Caco-2 (cell line): ENCODE measurements at regions of chr14 and their contacts with region 1.

Region 1: DNA sequence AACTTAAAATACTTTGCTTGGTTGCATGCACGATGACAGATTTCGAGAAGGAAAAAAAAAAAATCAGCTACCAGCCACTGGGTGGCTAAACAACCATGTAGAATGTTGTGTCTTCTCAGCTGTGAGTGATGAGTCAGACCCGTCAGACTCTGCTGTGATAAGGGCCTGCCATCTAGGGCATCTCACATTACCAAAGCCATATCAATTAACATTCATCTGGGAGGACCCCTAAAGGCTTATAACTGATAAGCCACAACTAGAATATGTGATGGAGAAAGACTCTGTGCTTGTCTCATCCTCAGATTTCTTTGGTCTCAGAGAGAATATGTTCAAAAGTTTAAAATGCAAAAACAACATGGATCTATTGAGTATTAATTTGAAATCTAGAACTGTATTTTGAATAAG is 111.5 kb downstream of the PAX9 start:
- DNase-seq: peak; percentile 56 to 58
- H3K4me3 ChIP-seq: no peak overlapping the region
- H3K4me3 Mint-ChIP-seq: no peak overlapping the region
- H3K27ac Mint-ChIP-seq: peak overlapping the region; percentile 57
- H3K4me1 ChIP-seq: peaks cover 51% of the 10 kb centered on the region
- H3K4me1 Mint-ChIP-seq: peaks cover 29% of the 10 kb centered on the region
- H3K27me3 ChIP-seq: no peaks in the 10 kb centered on the region
- H3K27me3 Mint-ChIP-seq: no peaks in the 10 kb centered on the region
- CTCF ChIP-seq: peak; percentile 46 to 48

Region 2: DNA sequence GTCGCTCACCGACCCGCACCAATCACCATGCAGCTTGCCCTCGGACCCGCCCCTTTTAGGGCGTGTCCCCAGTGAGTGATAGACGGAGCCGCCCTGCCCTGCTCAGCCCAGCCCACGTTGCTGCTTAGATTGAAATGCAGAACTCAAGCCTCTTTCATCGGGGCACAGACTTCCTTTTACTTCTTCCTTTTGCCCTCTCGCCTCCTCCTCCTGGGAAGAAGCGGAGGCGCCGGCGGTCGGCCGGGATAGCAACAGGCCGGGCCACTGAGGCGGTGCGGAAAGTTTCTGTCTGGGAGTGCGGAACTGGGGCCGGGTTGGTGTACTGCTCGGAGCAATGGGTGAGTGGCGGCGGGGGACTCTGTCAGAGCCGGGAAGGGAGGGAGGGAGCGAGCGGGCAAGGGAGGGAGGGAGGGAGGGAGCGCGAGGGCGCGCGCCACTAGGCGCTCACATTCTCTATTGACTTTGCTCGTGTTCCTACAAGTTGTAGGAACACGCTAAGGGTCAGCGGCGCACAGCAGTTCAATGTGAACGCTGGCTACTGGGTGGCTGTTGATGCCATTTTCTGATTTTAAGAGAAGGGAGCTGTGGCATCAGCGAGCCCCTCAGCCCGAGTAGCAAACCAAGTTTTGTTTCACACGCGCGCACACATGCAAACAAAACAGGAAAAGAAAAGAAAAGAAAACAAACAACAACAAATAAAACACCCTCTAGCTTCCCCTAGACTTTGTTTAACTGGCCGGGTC is 111.2 kb before region 1 on chr14 and contains the start of gene PAX9:
- CTCF ChIA-PET with region 1: no interaction called
- POLR2A ChIA-PET with region 1: no interaction called
- intact Hi-C with region 1: loop called (anchors 5 kb)
- DNase-seq: peak; percentile 93 to 95
- H3K4me3 ChIP-seq: peak within 1 kb of the TSS; percentile 64
- H3K4me3 Mint-ChIP-seq: peak within 1 kb of the TSS; percentile 82
- H3K27ac Mint-ChIP-seq: peak within 1 kb of the TSS; percentile 83
- H3K4me1 ChIP-seq: peaks cover 5% of the 10 kb centered on the region; the same call in 1 of the 2 replicates
- H3K4me1 Mint-ChIP-seq: no peaks in the 10 kb centered on the region
- H3K27me3 ChIP-seq: no peaks in the 10 kb centered on the region
- H3K27me3 Mint-ChIP-seq: no peaks in the 10 kb centered on the region
- CTCF ChIP-seq: no peak
- total RNA-seq, gene PAX9: 6.9 and 7.2 TPM in 2 replicates

Region 3: DNA sequence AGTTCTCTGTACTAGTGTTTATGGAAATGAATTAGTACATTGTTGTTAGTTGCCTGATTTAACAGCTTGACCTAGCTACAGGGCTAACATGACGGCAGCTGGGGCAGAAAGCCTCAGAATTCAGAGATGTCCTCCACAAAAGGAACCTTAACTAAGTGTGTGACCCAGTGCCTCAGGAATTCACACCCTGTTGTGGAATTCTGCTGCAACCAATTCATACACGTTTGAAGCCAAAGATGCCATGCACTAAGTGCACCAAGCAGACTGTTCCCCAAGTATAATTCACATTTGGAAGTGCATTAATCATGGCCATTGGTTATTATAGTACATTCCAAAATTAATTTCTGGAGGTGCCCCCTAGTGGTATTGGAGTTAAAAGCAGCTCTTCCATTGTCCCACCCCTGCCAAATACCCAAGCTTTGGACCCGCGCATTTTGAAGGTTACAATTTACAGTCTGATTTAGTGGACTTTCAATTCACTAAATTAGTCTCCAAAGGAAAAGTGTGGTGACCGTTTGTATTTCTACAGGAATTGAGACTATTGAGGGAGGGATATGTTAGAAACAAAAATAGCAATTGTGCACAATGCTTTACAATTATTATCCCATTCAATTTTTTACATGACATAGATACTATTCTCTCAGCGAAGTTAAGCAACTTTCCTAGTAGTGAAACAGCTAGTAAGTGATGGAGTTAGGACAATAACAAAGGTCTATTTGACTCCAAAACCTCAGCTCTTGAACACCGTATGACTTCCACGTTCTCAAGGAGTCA is 25.5 kb before region 1 on chr14:
- CTCF ChIA-PET with region 1: no interaction called
- POLR2A ChIA-PET with region 1: no interaction called
- intact Hi-C with region 1: no loop called
- DNase-seq: peak in 1 of 2 experiments; percentile 16
- H3K4me3 ChIP-seq: no peak overlapping the region
- H3K4me3 Mint-ChIP-seq: no peak overlapping the region
- H3K27ac Mint-ChIP-seq: no peak overlapping the region
- H3K4me1 ChIP-seq: peaks cover 11% of the 10 kb centered on the region; the same call in 1 of the 2 replicates
- H3K4me1 Mint-ChIP-seq: no peaks in the 10 kb centered on the region
- H3K27me3 ChIP-seq: no peaks in the 10 kb centered on the region
- H3K27me3 Mint-ChIP-seq: no peaks in the 10 kb centered on the region
- CTCF ChIP-seq: peak; percentile 47 to 67

Region 4: DNA sequence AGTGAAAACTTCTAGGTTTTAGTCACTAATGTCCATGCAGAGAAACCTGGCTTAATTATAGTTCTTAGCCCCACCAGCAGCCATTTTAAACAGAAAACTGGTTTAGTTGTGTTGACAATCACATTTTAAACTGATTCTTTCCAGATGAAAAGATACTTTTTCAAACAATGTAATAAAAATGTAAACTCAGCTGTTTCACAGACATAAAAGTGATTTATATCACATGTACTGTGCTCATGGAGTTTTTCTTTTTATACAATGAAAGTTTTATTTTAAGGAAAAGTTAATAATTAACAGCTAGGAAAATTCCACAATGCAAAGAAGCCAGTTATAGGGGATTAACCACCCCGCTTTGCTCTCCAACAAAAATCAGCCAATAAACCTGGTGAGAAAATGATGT is 18.3 kb after region 1 on chr14:
- CTCF ChIA-PET with region 1: no interaction called
- POLR2A ChIA-PET with region 1: no interaction called
- intact Hi-C with region 1: loop called (anchors 2 kb)
- DNase-seq: no peak
- H3K4me3 ChIP-seq: no peak overlapping the region
- H3K4me3 Mint-ChIP-seq: peak overlapping the region; percentile 33
- H3K27ac Mint-ChIP-seq: no peak overlapping the region
- H3K4me1 ChIP-seq: peaks cover 30% of the 10 kb centered on the region
- H3K4me1 Mint-ChIP-seq: peaks cover 4% of the 10 kb centered on the region
- H3K27me3 ChIP-seq: no peaks in the 10 kb centered on the region
- H3K27me3 Mint-ChIP-seq: no peaks in the 10 kb centered on the region
- CTCF ChIP-seq: no peak

Region 5: GRCh38 chr14:36901861-36902260 is 128.7 kb after region 1 on chr14:
- CTCF ChIA-PET with region 1: no interaction called
- POLR2A ChIA-PET with region 1: no interaction called
- intact Hi-C with region 1: no loop called
- DNase-seq: no peak
- H3K4me3 ChIP-seq: no peak overlapping the region
- H3K4me3 Mint-ChIP-seq: no peak overlapping the region
- H3K27ac Mint-ChIP-seq: no peak overlapping the region
- H3K4me1 ChIP-seq: no peaks in the 10 kb centered on the region
- H3K4me1 Mint-ChIP-seq: no peaks in the 10 kb centered on the region
- H3K27me3 ChIP-seq: no peaks in the 10 kb centered on the region
- H3K27me3 Mint-ChIP-seq: no peaks in the 10 kb centered on the region
- CTCF ChIP-seq: no peak